GM18951 (cell line): ENCODE measurements at regions of chr11 and their contacts with region 1.

Region 1: DNA sequence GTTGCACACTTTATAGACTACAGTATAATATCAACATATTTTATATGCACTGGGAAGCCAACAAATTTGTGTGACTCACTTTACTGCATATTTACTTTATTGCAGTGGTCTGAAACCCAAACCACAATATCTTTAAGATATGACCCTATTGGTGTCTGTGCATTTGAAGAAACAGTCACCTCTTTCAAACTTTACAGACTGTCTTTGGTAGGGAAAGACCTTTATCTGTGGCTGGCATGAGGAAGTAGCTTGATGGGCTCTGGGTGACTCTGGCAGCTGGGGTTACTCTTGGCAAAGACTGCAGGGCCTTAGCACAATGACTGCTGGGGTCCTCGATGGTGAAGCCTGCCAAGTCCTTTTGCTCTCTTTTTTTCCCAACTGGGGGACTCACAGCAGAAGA is 21.3 kb upstream of the ABTB2 start:
- POLR2A ChIP-seq: no peak

Region 2: GRCh38 chr11:33857933-33858371 is 521.1 kb before region 1 on chr11:
- in situ Hi-C with region 1: loop called (anchors 10 kb)
- POLR2A ChIP-seq: no peak

Region 3: GRCh38 chr11:34546511-34547222 is 167.6 kb after region 1 on chr11:
- in situ Hi-C with region 1: no loop called
- POLR2A ChIP-seq: no peak

Region 4: DNA sequence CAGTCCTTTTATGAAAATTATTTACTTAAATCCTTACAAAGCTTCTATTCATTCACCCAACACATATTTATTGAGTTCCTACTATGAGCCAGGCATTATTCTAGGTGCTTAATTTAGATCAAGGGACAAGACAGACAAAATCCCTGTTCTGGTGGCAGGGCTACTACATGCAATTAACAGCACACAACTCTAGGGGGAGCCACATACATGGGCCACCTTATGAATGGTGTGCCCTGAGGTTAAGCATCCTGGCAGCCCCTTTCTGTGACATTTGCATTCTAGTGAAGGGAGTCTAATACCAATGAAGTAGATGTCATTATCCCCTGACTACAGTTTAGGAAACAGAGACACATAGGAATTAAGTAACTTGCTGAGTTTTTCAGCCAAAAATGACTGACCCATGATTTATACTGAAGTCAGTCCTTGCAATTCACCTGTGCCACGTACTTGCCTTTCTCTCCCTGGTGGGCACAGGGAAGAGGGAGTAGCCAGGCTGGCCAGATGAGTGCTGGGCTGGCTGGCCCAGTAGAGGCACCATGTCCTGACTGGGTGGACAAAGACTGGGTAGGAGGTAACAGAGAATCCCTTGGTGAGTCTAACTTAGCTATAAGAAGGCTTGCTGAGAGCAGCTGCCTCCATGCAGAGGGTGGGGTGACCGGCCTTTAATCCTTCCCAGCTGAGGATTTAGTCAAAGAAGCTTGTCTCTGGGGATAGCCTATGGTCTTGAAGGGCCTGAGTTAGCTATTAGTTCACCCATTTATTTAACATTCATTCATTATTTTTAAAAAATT is 186.5 kb after region 1 on chr11:
- in situ Hi-C with region 1: no loop called
- POLR2A ChIP-seq: no peak